A549 (cell line): ENCODE measurements at regions of chr15 and their contacts with region 1.

Region 1: GRCh38 chr15:65400760-65401610 is 21.8 kb downstream of the IGDCC4 start:
- DNase-seq: peak; percentile 80 to 99
- ATAC-seq: peak; percentile 93 to 97
- H3K4me3 ChIP-seq: no peak overlapping the region
- H3K27ac ChIP-seq: peak overlapping the region; percentile 21 to 39; a peak in 1 of 6 replicates
- H3K4me1 ChIP-seq: peaks cover 5% of the 10 kb centered on the region
- CTCF ChIP-seq: peak; percentile 69
- EP300 ChIP-seq: no peak
- POLR2A ChIP-seq: no peak
- RAD21 ChIP-seq: peak; percentile 87 to 90

Region 2: DNA sequence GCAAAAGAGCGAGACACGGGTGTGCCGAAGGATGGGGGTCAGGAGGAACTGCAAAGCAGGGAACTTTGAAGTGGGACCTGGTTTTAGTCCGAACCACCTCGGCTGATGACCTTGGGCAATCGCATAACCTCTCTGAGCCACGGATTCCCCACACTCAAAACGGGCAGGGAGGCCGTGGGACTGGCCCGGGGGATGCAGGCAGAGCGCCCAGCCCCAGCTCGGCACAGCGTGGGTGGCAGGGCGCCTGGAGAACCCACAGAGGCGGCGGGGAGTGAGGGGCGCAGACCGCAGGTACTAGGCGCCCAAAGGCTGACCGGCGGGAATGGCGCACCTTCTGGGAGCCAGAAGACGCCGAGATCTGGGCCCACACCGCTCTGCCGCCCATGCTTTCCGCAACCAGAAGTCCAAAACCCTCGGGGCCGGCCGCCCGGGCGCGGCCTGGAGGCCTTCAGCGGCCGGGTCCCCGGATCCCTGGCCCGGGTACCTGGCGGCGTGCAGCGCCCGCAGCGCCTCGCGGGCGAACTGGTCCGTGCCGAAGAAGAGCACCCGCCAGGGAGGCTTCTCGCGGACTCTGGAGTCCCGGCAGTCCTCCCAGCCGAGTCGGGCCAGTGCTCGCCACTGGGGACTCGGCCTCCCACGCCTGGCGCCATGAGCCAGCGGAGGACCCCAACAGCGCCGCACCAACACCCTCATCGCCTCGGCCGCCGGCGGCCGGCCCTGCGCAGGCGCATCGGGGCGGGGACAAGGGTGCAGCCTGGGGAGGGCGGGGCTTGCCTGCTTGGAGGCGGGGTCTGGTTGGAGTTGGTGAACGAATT is 371.9 kb before region 1 on chr15 and contains the start of gene MTFMT:
- CTCF ChIA-PET with region 1: no interaction called
- POLR2A ChIA-PET with region 1: no interaction called
- DNase-seq: peak; percentile 88 to 97
- ATAC-seq: peak; percentile 65 to 83
- H3K4me3 ChIP-seq: peak within 1 kb of the TSS; percentile 73
- H3K27ac ChIP-seq: peak within 1 kb of the TSS; percentile 93 to 96
- H3K4me1 ChIP-seq: peaks cover 32% of the 10 kb centered on the region
- CTCF ChIP-seq: peak; percentile 18; the same call in 1 of the 3 replicates
- EP300 ChIP-seq: no peak
- POLR2A ChIP-seq: peak; percentile 99
- RAD21 ChIP-seq: no peak
- polyA plus RNA-seq, gene MTFMT: 23.4 and 25.2 TPM in 2 replicates

Region 3: DNA sequence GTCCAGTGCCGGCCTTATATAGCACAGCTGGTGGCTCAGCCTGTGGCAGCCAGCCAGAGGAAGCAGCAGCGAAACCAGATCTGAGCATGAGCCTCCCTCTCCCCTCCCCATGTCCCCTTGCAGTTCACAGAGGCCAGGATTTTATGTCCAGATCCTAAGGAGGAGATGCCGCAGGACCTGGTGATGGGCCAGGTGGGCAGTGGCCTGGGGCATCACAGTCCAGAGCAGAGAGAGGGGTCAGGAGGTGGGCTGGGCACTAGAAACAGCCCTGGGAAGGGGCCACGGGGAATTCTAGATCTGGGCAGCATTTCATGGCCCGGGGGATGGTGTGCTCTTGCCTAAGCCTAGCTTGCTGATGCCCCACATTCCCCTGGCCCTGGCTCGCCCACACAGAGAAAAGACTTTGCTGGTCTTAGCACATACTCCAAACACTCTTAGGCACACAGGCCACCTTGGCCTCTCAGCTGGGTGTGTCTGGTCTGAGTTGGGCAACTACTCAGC is 189.5 kb before region 1 on chr15:
- CTCF ChIA-PET with region 1: no interaction called
- POLR2A ChIA-PET with region 1: no interaction called
- DNase-seq: no peak
- ATAC-seq: peak in 1 of 2 experiments; percentile 14; a peak in 3 of 6 replicates
- H3K4me3 ChIP-seq: no peak overlapping the region
- H3K27ac ChIP-seq: peak overlapping the region in 1 of 2 experiments; percentile 9; a peak in 1 of 6 replicates
- H3K4me1 ChIP-seq: peaks cover 7% of the 10 kb centered on the region; the same call in 1 of the 3 replicates
- CTCF ChIP-seq: no peak
- EP300 ChIP-seq: no peak
- POLR2A ChIP-seq: no peak
- RAD21 ChIP-seq: no peak

Region 4: GRCh38 chr15:65318870-65319356 is 82.1 kb before region 1 on chr15:
- CTCF ChIA-PET with region 1: interaction called, 228 read pairs
- POLR2A ChIA-PET with region 1: no interaction called
- DNase-seq: peak; percentile 83 to 97
- ATAC-seq: peak; percentile 96 to 98
- H3K4me3 ChIP-seq: no peak overlapping the region
- H3K27ac ChIP-seq: no peak overlapping the region
- H3K4me1 ChIP-seq: no peaks in the 10 kb centered on the region
- CTCF ChIP-seq: peak; percentile 98
- EP300 ChIP-seq: no peak
- POLR2A ChIP-seq: no peak
- RAD21 ChIP-seq: peak; percentile 99

Region 5: DNA sequence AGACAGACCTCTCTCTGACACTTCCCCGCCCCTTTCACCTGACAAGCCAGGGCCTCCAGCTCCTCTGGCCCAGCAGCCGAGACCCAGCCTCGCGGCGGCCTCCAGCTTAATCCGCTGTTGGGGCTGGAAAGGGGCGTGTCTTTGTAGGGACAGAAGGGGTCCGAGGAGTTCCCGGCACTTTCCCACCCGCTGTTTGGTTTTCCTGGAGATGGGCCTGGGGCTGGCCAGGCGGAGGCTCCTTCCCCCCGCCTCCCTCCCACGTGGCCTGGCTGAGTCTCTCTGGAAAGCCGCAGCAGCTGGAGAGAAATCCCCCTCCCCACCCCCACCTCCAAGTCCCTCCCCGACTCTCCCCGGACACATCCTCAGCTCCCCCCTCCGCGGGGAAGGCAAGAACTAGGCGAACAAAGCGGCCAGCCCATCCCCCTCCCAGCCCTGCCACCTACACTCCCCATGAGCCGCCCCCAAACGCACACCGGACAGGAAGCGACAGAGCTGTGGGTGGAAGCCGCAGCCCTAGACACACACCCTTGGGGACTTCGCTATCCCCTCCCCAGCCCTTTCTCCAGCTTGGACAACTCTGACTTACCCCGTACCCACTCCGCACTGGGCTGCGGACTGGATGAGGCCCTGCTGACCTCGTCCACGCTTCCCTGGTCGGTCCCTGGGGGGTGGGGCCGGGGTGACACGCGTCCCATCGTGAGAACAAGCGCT is 20.5 kb after region 1 on chr15:
- CTCF ChIA-PET with region 1: interaction called, 256 read pairs
- POLR2A ChIA-PET with region 1: no interaction called
- DNase-seq: no peak
- ATAC-seq: peak in 1 of 2 experiments; percentile 32; a peak in 3 of 6 replicates
- H3K4me3 ChIP-seq: peak overlapping the region; percentile 74
- H3K27ac ChIP-seq: peak overlapping the region; percentile 83 to 92
- H3K4me1 ChIP-seq: peaks cover 36% of the 10 kb centered on the region
- CTCF ChIP-seq: no peak
- EP300 ChIP-seq: no peak
- POLR2A ChIP-seq: no peak
- RAD21 ChIP-seq: no peak

Region 6: GRCh38 chr15:65466901-65467300 is 65.9 kb after region 1 on chr15:
- CTCF ChIA-PET with region 1: interaction called, 24 read pairs
- POLR2A ChIA-PET with region 1: no interaction called
- DNase-seq: no peak
- ATAC-seq: no peak
- H3K4me3 ChIP-seq: no peak overlapping the region
- H3K27ac ChIP-seq: no peak overlapping the region
- H3K4me1 ChIP-seq: 0 out of 3 replicates have a peak, but pooled peaks cover 5% of the 10 kb centered on the region
- CTCF ChIP-seq: no peak
- EP300 ChIP-seq: no peak
- POLR2A ChIP-seq: no peak
- RAD21 ChIP-seq: no peak

Region 7: DNA sequence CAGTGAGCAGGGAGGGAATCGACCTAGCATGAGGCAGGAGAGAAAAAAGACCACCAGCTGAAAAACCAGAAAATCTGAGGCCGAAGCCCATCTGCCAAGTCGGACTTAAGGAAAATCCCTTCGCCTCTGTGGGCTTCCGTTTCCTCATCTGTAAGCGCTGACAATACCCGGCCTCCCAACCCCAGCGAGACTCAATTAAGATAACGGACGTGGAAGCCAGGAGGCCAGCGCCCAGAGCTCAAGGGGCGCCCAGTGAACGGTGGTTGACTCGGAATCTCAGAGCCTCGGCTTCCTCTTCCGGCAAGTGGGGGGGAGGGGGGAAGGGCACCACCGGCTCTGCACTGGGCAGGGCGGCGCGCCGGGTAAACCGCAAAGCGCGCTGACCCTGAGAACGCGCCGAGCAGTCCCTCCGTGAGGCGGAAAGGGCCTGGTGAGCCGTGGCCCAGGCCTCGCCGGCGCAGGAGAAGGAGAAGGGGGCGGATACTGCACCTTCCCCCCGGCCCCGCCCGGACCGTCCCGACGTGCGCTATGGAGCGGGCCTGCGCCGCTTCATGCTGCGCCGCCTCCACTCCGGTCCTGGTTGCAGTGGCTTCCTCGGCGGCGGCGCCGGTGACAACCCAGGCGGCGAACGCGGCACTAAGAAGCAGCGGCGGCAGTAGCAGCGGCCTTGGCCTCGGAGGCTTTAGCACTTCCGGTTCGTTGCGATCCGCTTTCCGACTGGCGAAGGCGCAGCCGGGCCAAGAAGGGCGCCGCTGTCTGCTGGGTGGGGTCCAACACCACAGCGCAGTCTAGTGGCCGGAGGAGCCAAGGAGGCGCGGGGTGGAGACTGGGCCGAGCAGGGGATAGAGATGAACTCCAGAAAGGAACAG is 116.2 kb after region 1 on chr15 and contains the start of gene DPP8:
- CTCF ChIA-PET with region 1: interaction called, 13 read pairs
- POLR2A ChIA-PET with region 1: interaction called, 5 read pairs
- DNase-seq: peak; percentile 95 to 98
- ATAC-seq: peak; percentile 97 to 99
- H3K4me3 ChIP-seq: peak within 1 kb of the TSS; percentile 84
- H3K27ac ChIP-seq: peak within 1 kb of the TSS; percentile 93 to 97
- H3K4me1 ChIP-seq: peaks cover 19% of the 10 kb centered on the region
- CTCF ChIP-seq: peak; percentile 97
- EP300 ChIP-seq: no peak
- POLR2A ChIP-seq: peak; percentile 69
- RAD21 ChIP-seq: peak; percentile 19 to 43; a peak in 1 of 5 replicates
- polyA plus RNA-seq, gene DPP8: 41.8 and 43.3 TPM in 2 replicates